Endothelial cell of umbilical vein (primary cell): ENCODE measurements at regions of chr7 and their contacts with region 1.

Region 1: DNA sequence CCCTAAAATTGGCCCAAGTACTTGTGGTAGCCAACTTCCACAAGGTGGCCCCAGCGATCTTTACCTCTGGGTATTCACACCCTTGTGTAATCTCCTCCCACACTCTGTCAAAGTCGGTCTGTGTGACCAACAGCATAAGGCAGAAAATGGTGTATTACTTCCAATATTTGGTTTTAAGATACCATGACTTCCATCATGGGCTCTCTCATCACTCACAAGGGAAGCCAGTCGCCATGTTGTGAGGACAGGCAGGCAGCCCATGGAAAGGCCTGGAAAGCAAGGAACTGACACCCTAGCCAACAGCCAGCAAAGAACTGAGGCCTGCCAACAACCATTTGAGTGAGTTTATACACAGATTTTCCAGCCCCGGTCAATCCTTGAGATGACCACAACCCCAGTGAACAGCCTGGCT is 91.0 kb upstream of the KMT2E start:
- DNase-seq: peak; percentile 95
- H3K4me3 ChIP-seq: no peak overlapping the region
- H3K27ac ChIP-seq: peak overlapping the region; percentile 50
- H3K4me1 ChIP-seq: peaks cover 15% of the 10 kb centered on the region
- H3K27me3 ChIP-seq: peaks cover 0 to 3% of the 10 kb centered on the region in 2 experiments
- CTCF ChIP-seq: peak; percentile 78 to 86
- POLR2A ChIP-seq: no peak

Region 2: GRCh38 chr7:104156842-104157277 is 766.2 kb before region 1 on chr7:
- CTCF ChIA-PET with region 1: no interaction called
- POLR2A ChIA-PET with region 1: no interaction called
- dilution Hi-C with region 1: no loop called
- intact Hi-C with region 1: loop called (anchors 5 kb)
- DNase-seq: peak; percentile 44
- H3K4me3 ChIP-seq: no peak overlapping the region
- H3K27ac ChIP-seq: no peak overlapping the region
- H3K4me1 ChIP-seq: no peaks in the 10 kb centered on the region
- H3K27me3 ChIP-seq: no peaks in the 10 kb centered on the region
- CTCF ChIP-seq: peak; percentile 34 to 41
- POLR2A ChIP-seq: no peak

Region 3: GRCh38 chr7:104679085-104679484 is 243.9 kb before region 1 on chr7:
- CTCF ChIA-PET with region 1: no interaction called
- POLR2A ChIA-PET with region 1: no interaction called
- dilution Hi-C with region 1: no loop called
- intact Hi-C with region 1: no loop called
- DNase-seq: no peak
- H3K4me3 ChIP-seq: no peak overlapping the region
- H3K27ac ChIP-seq: no peak overlapping the region
- H3K4me1 ChIP-seq: no peaks in the 10 kb centered on the region
- H3K27me3 ChIP-seq: peaks cover 0 to 1% of the 10 kb centered on the region in 2 experiments
- CTCF ChIP-seq: no peak
- POLR2A ChIP-seq: no peak

Region 4: GRCh38 chr7:104848138-104848990 is 74.7 kb before region 1 on chr7:
- CTCF ChIA-PET with region 1: interaction called, 12 read pairs
- POLR2A ChIA-PET with region 1: no interaction called
- dilution Hi-C with region 1: no loop called
- intact Hi-C with region 1: no loop called
- DNase-seq: peak; percentile 62
- H3K4me3 ChIP-seq: no peak overlapping the region
- H3K27ac ChIP-seq: no peak overlapping the region
- H3K4me1 ChIP-seq: no peaks in the 10 kb centered on the region
- H3K27me3 ChIP-seq: peaks cover 6 to 13% of the 10 kb centered on the region in 2 experiments
- CTCF ChIP-seq: peak; percentile 79 to 81
- POLR2A ChIP-seq: no peak

Region 5: GRCh38 chr7:104900525-104901239 is 22.3 kb before region 1 on chr7:
- CTCF ChIA-PET with region 1: interaction called, 16 read pairs
- POLR2A ChIA-PET with region 1: no interaction called
- dilution Hi-C with region 1: no loop called
- intact Hi-C with region 1: no loop called
- DNase-seq: no peak
- H3K4me3 ChIP-seq: no peak overlapping the region
- H3K27ac ChIP-seq: no peak overlapping the region
- H3K4me1 ChIP-seq: no peaks in the 10 kb centered on the region
- H3K27me3 ChIP-seq: peaks cover 0 to under 1% of the 10 kb centered on the region in 2 experiments
- CTCF ChIP-seq: no peak
- POLR2A ChIP-seq: no peak

Region 6: DNA sequence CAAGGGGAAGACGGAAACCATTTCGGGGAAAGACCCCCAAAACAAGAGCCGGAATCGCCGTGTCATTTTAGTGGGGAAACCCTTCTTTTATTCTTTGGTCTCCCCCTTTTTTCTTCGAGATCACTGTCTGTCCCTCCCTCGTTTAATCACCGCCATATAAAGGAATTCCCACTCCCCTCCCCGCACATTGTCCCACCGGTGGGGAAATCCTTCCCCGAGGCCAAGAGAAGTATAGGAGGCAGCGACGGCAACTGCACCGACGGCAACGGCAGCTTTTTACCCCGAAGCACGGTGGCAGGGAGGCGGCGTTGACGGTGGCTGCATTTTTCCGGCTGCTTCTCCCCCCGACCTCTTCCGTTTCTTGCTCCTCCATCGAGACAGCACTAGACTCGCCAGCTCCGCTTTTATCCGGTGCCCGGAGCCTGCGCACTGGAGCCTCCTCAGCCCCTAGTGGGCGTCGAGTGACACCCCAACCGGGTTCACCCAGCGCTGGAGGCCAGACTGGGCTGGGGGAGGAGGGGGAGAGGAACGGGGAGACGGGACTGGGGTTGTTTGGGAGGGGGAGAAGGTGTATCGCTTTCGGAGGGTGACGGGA is 90.3 kb after region 1 on chr7:
- CTCF ChIA-PET with region 1: interaction called, 7 read pairs
- POLR2A ChIA-PET with region 1: interaction called, 3 read pairs
- dilution Hi-C with region 1: no loop called
- intact Hi-C with region 1: loop called (anchors 1 kb)
- DNase-seq: peak; percentile 94
- H3K4me3 ChIP-seq: peak overlapping the region; percentile 97 to 99 (median 98)
- H3K27ac ChIP-seq: peak overlapping the region; percentile 98
- H3K4me1 ChIP-seq: peaks cover 31% of the 10 kb centered on the region
- H3K27me3 ChIP-seq: no peaks in the 10 kb centered on the region
- CTCF ChIP-seq: peak; percentile 56 to 72
- POLR2A ChIP-seq: peak; percentile 21

Region 7: DNA sequence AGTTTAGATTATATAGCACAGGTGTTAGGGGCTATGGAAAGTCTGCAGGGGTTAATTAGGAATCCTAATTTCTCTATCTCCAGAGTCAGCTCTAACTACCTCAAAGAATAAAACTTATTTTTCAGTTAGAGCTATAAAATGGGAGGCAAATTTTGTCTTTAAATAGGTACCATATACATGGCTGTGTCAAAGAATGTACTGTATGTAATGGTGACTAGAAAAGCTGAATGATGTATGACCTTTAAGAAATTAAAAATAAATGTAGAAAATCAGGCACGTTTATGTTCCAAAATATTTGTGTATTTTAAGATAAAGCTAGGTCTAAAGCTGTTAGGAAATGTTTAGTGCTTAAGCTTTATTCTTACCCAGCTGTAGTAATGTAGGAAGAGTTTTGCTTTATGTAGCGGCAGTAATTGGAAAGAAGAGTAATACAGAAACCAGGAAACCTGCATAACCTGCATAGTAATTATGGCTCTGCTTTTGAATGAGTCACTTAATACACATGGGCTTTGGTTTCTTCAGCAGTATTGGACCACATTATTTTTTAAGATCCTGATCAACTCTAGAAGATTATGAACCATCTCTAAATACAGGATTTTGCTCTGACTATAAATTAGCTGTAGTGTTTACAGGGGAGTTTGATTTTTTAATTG is 176.0 kb after region 1 on chr7:
- CTCF ChIA-PET with region 1: no interaction called
- POLR2A ChIA-PET with region 1: no interaction called
- dilution Hi-C with region 1: no loop called
- intact Hi-C with region 1: loop called (anchors 5 kb)
- DNase-seq: peak; percentile 38
- H3K4me3 ChIP-seq: no peak overlapping the region
- H3K27ac ChIP-seq: peak overlapping the region; percentile 60
- H3K4me1 ChIP-seq: peaks cover 24% of the 10 kb centered on the region
- H3K27me3 ChIP-seq: no peaks in the 10 kb centered on the region
- CTCF ChIP-seq: no peak
- POLR2A ChIP-seq: no peak

Region 8: DNA sequence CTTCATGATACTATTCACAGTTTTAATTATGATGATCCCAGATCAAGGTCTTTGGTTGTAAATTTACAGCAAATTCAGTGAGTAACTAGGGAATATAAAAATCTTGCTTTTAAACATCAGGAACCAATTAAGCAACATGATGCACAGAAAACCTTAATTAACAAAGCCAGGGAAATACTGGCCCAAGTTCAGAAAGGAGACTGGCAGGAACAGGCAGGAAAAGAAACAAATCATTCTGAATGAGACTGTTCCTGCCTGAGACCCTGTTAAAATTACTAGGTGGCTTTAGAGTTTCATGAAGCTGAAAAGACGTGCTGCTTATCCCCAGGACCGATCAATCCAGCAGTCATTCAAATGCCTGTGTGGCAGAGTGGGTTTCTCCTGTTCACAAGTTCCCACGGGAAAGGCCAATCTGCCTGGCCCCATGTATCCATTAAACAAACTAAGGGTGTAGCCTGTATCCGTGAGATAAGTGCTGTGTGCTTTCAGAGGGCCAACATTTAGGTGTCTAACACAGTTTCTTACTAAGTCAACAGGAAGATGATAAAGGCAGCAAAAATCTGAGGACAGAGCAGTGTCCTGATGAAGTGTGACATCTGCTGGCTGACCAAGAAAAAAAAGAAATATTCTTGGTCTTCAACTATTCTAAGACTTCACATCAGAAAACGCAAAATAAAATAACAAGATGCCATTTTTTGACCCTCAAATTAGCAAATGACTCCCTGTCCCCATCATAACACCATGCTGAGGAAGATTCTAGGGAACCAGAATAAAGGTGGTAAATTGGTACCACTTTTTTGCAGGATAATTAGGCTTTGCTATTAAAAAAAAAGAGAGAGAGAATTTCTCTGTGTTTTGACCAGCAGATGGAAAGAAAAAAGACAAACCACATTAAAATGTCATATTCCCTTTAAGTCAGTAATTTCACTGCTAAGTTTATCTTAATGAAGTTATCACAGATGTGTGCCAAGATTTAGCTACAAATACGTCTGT is 564.9 kb after region 1 on chr7:
- CTCF ChIA-PET with region 1: interaction called, 5 read pairs
- POLR2A ChIA-PET with region 1: no interaction called
- dilution Hi-C with region 1: no loop called
- intact Hi-C with region 1: loop called (anchors 1 kb)
- DNase-seq: peak; percentile 100
- H3K4me3 ChIP-seq: peak overlapping the region in 1 of 3 experiments; percentile 10
- H3K27ac ChIP-seq: peak overlapping the region; percentile 98
- H3K4me1 ChIP-seq: peaks cover 29% of the 10 kb centered on the region
- H3K27me3 ChIP-seq: no peaks in the 10 kb centered on the region
- CTCF ChIP-seq: peak; percentile 22 to 39
- POLR2A ChIP-seq: peak; percentile 78